A549 (cell line): ENCODE measurements at regions of chr6 and their contacts with region 1.

Region 1: GRCh38 chr6:157597446-157598312 is 216.7 kb downstream of the ZDHHC14 start:
- DNase-seq: peak; percentile 26 to 28
- ATAC-seq: peak; percentile 77 to 85; a peak in 5 of 6 replicates
- H3K4me3 ChIP-seq: no peak overlapping the region
- H3K27ac ChIP-seq: no peak overlapping the region
- H3K4me1 ChIP-seq: no peaks in the 10 kb centered on the region
- CTCF ChIP-seq: peak; percentile 48
- EP300 ChIP-seq: no peak
- POLR2A ChIP-seq: no peak
- RAD21 ChIP-seq: peak; percentile 57 to 63

Region 2: DNA sequence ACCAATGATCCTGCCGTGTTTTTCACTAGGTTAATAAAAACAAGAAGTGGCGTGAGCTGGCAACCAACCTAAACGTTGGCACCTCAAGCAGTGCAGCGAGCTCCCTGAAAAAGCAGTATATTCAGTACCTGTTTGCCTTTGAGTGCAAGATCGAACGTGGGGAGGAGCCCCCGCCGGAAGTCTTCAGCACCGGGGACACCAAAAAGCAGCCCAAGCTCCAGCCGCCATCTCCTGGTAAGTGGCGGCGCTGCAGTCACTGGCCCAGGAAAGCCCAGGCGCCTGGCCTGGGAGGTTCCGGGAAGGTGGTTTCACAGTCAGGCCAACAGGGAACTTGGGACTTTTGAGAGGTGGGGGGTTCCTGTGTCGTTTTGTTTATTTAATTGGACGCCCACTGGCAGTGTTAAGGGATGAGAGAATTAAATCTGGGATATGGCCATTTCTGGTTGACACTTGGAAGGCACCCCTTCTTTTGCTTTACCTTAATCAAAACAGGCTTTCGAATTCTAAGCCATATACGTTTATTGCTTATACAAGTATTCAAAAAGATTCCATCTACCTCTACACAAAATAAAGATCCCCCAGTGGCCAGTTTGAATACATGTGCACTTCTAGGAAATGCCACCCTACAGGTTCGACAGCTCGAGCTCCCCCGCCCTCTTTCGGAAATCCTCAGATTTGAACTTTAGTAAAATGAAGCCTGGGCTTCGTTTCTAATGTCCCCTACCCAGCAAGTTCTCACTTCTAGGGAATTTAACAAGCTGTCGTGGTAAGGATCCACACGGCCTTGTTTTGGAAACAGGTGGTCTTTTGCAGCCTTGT is 413.3 kb before region 1 on chr6:
- CTCF ChIA-PET with region 1: no interaction called
- POLR2A ChIA-PET with region 1: no interaction called
- DNase-seq: peak; percentile 45 to 52
- ATAC-seq: peak; percentile 84 to 94
- H3K4me3 ChIP-seq: no peak overlapping the region
- H3K27ac ChIP-seq: peak overlapping the region in 1 of 2 experiments; percentile 48; a peak in 1 of 6 replicates
- H3K4me1 ChIP-seq: peaks cover 24% of the 10 kb centered on the region
- CTCF ChIP-seq: peak; percentile 75
- EP300 ChIP-seq: no peak
- POLR2A ChIP-seq: no peak
- RAD21 ChIP-seq: peak; percentile 82 to 84

Region 3: DNA sequence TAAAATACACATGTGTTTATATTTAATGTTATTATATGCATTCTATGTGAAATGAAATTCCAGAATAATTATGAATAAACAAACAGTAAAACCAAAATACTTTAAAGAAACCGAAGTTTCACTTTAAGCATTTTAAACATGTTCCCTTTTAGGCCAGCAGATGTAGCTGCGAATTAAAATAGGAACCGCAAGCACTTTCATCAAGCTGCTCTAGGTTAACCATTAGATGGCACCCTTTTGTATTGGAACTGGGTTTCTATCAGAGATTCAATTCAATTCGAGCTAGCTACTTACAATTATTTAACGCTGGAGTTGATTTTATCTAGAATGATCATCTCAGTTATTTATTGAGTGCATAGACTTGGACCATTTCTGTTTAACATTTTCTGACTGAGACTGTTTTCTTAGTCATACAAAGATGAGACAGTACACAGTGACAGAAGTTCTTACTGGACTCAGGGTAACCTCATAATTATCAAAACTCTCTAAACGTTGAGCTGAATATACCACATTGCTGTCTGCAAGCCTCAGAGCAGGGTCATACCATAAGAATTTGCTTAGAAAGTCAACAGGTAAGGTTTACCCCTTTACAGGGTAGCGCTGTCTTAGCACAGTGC is 282.9 kb before region 1 on chr6:
- CTCF ChIA-PET with region 1: interaction called, 16 read pairs
- POLR2A ChIA-PET with region 1: no interaction called
- DNase-seq: peak; percentile 40 to 60
- ATAC-seq: peak in 1 of 2 experiments; percentile 86; a peak in 3 of 6 replicates
- H3K4me3 ChIP-seq: no peak overlapping the region
- H3K27ac ChIP-seq: no peak overlapping the region
- H3K4me1 ChIP-seq: peaks cover 17% of the 10 kb centered on the region
- CTCF ChIP-seq: peak; percentile 94
- EP300 ChIP-seq: no peak
- POLR2A ChIP-seq: no peak
- RAD21 ChIP-seq: peak; percentile 78 to 82

Region 4: GRCh38 chr6:157571269-157571668 is 26.4 kb before region 1 on chr6:
- CTCF ChIA-PET with region 1: no interaction called
- POLR2A ChIA-PET with region 1: no interaction called
- DNase-seq: no peak
- ATAC-seq: no peak
- H3K4me3 ChIP-seq: no peak overlapping the region
- H3K27ac ChIP-seq: no peak overlapping the region
- H3K4me1 ChIP-seq: no peaks in the 10 kb centered on the region
- CTCF ChIP-seq: no peak
- EP300 ChIP-seq: no peak
- POLR2A ChIP-seq: no peak
- RAD21 ChIP-seq: no peak